Ascending aorta (tissue), 2 donors: ENCODE measurements at regions of chr12 and their contacts with region 1.

Region 1: GRCh38 chr12:6423267-6424007 is 21.3 kb upstream of the CD27 start:
- DNase-seq: peak; percentile 46 to 92
- H3K4me3 ChIP-seq: no peak overlapping the region
- H3K27ac ChIP-seq: no peak overlapping the region
- H3K4me1 ChIP-seq: peaks cover 0 to 4% of the 10 kb centered on the region in 2 donors
- H3K27me3 ChIP-seq: no peaks in the 10 kb centered on the region
- CTCF ChIP-seq: peak; percentile 85 to 92 (median 90)

Region 2: GRCh38 chr12:6323340-6323994 is 100.0 kb before region 1 on chr12:
- intact Hi-C with region 1: loop called (anchors 2 kb)
- DNase-seq: peak in 1 of 2 donors; percentile 86
- H3K4me3 ChIP-seq: peak overlapping the region in 1 of 2 donors; percentile 44
- H3K27ac ChIP-seq: peak overlapping the region; percentile 75 to 81
- H3K4me1 ChIP-seq: peaks cover 5 to 30% of the 10 kb centered on the region in 2 donors
- H3K27me3 ChIP-seq: no peaks in the 10 kb centered on the region
- CTCF ChIP-seq: peak; percentile 40 to 56 (median 56)

Region 3: GRCh38 chr12:6335451-6336078 is 87.9 kb before region 1 on chr12:
- intact Hi-C with region 1: loop called (anchors 1 kb)
- DNase-seq: peak; percentile 65 to 94
- H3K4me3 ChIP-seq: peak overlapping the region; percentile 90 to 93
- H3K27ac ChIP-seq: peak overlapping the region; percentile 97 to 98
- H3K4me1 ChIP-seq: peaks cover 24 to 52% of the 10 kb centered on the region in 2 donors
- H3K27me3 ChIP-seq: no peaks in the 10 kb centered on the region
- CTCF ChIP-seq: peak; percentile 43 to 71 (median 69)

Region 4: GRCh38 chr12:6383572-6384498 is 39.6 kb before region 1 on chr12 and contains the start of gene LTBR:
- intact Hi-C with region 1: no loop called
- DNase-seq: peak; percentile 78 to 98
- H3K4me3 ChIP-seq: peak within 1 kb of the TSS; percentile 80 to 89
- H3K27ac ChIP-seq: peak within 1 kb of the TSS; percentile 97 to 98
- H3K4me1 ChIP-seq: peaks cover 9 to 25% of the 10 kb centered on the region in 2 donors
- H3K27me3 ChIP-seq: no peaks in the 10 kb centered on the region
- CTCF ChIP-seq: peak in 1 of 3 experiments; percentile 22
- total RNA-seq, gene LTBR: 284 TPM

Region 5: GRCh38 chr12:6451348-6452244 is 28.2 kb after region 1 on chr12 and contains the start of gene TAPBPL:
- intact Hi-C with region 1: loop called (anchors 2 kb)
- DNase-seq: peak; percentile 54 to 91
- H3K4me3 ChIP-seq: peak within 1 kb of the TSS; percentile 69 to 74
- H3K27ac ChIP-seq: peak within 1 kb of the TSS; percentile 90 to 95
- H3K4me1 ChIP-seq: peaks cover 6 to 22% of the 10 kb centered on the region in 2 donors
- H3K27me3 ChIP-seq: no peaks in the 10 kb centered on the region
- CTCF ChIP-seq: no peak
- total RNA-seq, gene TAPBPL: 16.8 TPM

Region 6: GRCh38 chr12:6507102-6507998 is 83.9 kb after region 1 on chr12:
- intact Hi-C with region 1: no loop called
- DNase-seq: no peak
- H3K4me3 ChIP-seq: no peak overlapping the region
- H3K27ac ChIP-seq: peak overlapping the region; percentile 86 to 94
- H3K4me1 ChIP-seq: peaks cover 6 to 8% of the 10 kb centered on the region in 2 donors
- H3K27me3 ChIP-seq: no peaks in the 10 kb centered on the region
- CTCF ChIP-seq: no peak

Region 7: GRCh38 chr12:6533923-6534694 is 110.7 kb after region 1 on chr12 and contains the start of gene GAPDH:
- intact Hi-C with region 1: loop called (anchors 2 kb)
- DNase-seq: peak; percentile 52 to 94
- H3K4me3 ChIP-seq: peak within 1 kb of the TSS; percentile 79 to 98
- H3K27ac ChIP-seq: peak within 1 kb of the TSS; percentile 98 to 99
- H3K4me1 ChIP-seq: peaks cover 19 to 30% of the 10 kb centered on the region in 2 donors
- H3K27me3 ChIP-seq: no peaks in the 10 kb centered on the region
- CTCF ChIP-seq: no peak
- total RNA-seq, gene GAPDH: 3,445 TPM